ENCODE measurements at regions of chr1 and their contacts with region 1.

Region 1: GRCh38 chr1:97308131-97308530 is 586.5 kb downstream of the PTBP2 start:
- DNase-seq: no peak
- H3K4me3 ChIP-seq: no peak overlapping the region
- H3K27ac ChIP-seq: no peak overlapping the region
- H3K4me1 ChIP-seq: no peaks in the 10 kb centered on the region
- H3K27me3 ChIP-seq: no peaks in the 10 kb centered on the region
- CTCF ChIP-seq: no peak

Region 2: DNA sequence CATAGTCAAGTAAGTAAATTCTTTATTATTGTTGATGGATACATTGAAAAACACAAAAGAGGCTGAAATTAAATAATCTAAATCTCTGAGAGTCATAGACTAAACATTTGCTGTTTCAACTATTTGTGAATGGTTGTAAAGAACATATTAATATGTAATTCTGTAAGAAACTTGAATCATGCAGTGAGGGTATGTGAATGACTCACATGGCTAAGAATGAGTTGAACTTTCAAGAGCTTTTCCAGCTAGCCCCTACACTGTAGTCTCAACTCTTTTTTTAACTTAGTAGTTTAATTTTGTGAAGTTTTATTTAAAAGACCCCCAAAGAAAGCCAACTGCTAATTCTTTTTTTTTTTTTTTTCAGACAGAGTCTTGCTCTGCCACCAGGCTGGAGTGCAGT is 24.6 kb after region 1 on chr1:
- CTCF ChIA-PET with region 1: no interaction called
- POLR2A ChIA-PET with region 1: no interaction called
- intact Hi-C with region 1: loop called (anchors 1 kb)
- DNase-seq: no peak
- H3K4me3 ChIP-seq: no peak overlapping the region
- H3K27ac ChIP-seq: no peak overlapping the region
- H3K4me1 ChIP-seq: peaks cover 12% of the 10 kb centered on the region
- H3K27me3 ChIP-seq: no peaks in the 10 kb centered on the region
- CTCF ChIP-seq: no peak